ENCODE measurements at regions of chr12 and their contacts with region 1.

Region 1: GRCh38 chr12:95942524-95943329 is at the start of gene CCDC38:
- DNase-seq: peak; percentile 92
- ATAC-seq: peak; percentile 95
- H3K4me3 Mint-ChIP-seq: peak within 1 kb of the TSS; percentile 91
- H3K27ac Mint-ChIP-seq: peak within 1 kb of the TSS; percentile 85
- H3K4me1 Mint-ChIP-seq: peaks cover 11% of the 10 kb centered on the region
- H3K27me3 Mint-ChIP-seq: peaks cover under 1% of the 10 kb centered on the region
- total RNA-seq, gene CCDC38: 0.12 to 0.50 TPM

Region 2: DNA sequence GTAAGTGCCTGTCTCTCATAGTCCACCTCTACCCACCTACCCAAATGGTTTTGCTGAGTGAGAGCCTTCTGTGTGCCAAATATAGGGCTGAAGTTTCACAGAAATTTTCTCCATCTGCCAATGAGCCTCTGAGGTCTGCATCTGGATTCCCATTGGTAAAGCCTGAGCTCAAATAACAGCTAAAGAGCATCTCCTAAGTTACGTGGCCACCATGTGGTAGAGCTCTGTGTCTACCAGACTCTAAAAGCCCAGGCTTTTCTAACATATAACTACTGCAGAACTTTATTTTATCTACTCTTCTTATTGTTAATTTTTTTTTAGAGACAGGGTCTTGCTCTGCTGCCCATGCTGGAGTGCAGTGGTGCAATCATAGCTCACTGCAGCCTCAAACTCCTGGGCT is 16.4 kb after region 1 on chr12:
- CTCF ChIA-PET with region 1: interaction called, 10 read pairs
- DNase-seq: no peak
- ATAC-seq: no peak
- H3K4me3 Mint-ChIP-seq: no peak overlapping the region
- H3K27ac Mint-ChIP-seq: no peak overlapping the region
- H3K4me1 Mint-ChIP-seq: no peaks in the 10 kb centered on the region
- H3K27me3 Mint-ChIP-seq: no peaks in the 10 kb centered on the region

Region 3: DNA sequence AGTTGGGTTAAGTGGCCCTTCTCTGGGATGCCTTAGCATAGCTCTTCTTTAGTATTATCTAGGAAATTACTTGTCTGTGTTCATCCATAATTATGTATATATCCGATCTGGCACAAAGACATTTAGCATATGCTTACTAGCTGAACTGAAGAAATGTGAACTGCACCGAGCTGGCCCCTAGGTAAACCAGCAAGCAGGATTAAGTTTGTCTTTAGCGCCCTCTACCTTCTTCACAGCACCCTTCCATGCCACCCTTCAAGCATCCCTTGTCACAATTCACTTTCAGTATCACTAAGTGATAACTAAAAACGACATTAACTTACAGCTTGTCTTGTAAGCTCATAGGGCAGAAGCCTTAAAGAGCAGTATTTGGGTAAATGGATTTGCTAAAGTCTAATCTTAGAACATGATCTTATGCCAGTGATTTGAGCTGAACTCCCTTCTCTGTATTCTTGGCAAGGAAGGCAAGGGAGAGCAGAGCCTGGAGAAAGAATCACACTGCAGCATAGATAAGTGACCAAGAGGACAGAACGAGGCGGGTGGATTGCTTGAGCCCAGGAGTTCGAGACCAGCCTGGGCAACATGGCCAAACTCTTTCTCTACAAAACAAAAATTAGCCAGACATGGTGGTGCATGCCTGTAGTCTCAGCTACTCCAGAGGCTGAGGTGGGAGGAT is 56.0 kb after region 1 on chr12:
- CTCF ChIA-PET with region 1: interaction called, 15 read pairs
- DNase-seq: peak; percentile 73
- ATAC-seq: peak; percentile 99
- H3K4me3 Mint-ChIP-seq: no peak overlapping the region
- H3K27ac Mint-ChIP-seq: peak overlapping the region; percentile 52
- H3K4me1 Mint-ChIP-seq: peaks cover 11% of the 10 kb centered on the region
- H3K27me3 Mint-ChIP-seq: no peaks in the 10 kb centered on the region